K562 (cell line): ENCODE measurements at regions of chr20 and their contacts with region 1.

Region 1: DNA sequence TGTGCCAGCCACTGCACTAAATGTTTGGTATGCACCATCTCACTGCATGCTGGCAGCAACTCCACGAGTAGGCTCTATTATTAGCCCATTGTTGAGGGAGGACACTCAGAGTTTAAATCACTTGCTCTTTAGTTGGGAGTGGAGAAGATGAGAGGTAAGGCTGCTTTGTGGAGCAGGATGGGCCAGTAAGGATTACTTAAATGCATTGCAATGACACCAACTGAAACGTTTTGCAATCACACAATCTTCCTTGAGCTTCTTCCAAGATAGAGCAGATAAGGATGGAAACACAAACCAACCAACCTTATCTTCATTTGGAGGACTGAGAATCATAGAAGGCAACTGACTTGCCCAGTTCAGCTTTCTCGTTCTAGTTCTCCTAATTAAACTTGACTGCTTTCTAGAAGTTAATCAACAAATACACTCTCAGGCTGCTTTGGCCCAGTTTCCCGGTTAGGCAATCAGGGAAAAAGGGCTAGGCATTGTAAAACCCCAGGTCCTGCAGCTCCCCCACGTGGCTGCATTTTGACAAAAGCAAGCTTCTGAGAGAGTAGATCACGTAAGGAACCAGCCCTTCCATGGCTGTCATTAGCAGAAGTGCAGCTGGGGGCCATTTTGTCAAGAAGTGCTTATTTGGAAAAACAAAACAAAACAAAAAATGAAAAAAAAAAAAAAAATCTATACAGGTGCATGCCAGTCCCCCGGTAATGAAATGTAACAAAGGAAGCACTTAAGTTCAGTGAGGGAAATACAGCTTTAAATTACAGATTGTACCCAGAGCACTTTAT is 130.6 kb downstream of the BCAS1 start:
- DNase-seq: peak; percentile 80 to 95 (median 81)
- ATAC-seq: peak; percentile 87
- H3K4me3 ChIP-seq: no peak overlapping the region
- H3K27ac ChIP-seq: peak overlapping the region; percentile 33; the same call in 2 of the 3 replicates
- H3K4me1 ChIP-seq: peaks cover 0 to 56% of the 10 kb centered on the region in 2 experiments; a peak in 4 of 5 replicates
- H3K27me3 ChIP-seq: no peaks in the 10 kb centered on the region
- CTCF ChIP-seq: peak; percentile 87 to 91 (median 88)
- EP300 ChIP-seq: no peak
- POLR2A ChIP-seq: no peak
- RAD21 ChIP-seq: peak; percentile 94 to 96

Region 2: GRCh38 chr20:53413186-53413631 is 526.6 kb before region 1 on chr20:
- CTCF ChIA-PET with region 1: interaction called, 8 read pairs
- POLR2A ChIA-PET with region 1: interaction called, 3 read pairs
- in situ Hi-C with region 1: no loop called
- intact Hi-C with region 1: loop called (anchors 2 kb)
- DNase-seq: peak; percentile 61 to 67 (median 62)
- ATAC-seq: peak; percentile 88
- H3K4me3 ChIP-seq: no peak overlapping the region
- H3K27ac ChIP-seq: no peak overlapping the region
- H3K4me1 ChIP-seq: no peaks in the 10 kb centered on the region; a peak in 2 of 5 replicates
- H3K27me3 ChIP-seq: peaks cover 0 to 5% of the 10 kb centered on the region in 2 experiments; a peak in 4 of 5 replicates
- CTCF ChIP-seq: peak; percentile 77 to 91 (median 85)
- EP300 ChIP-seq: no peak
- POLR2A ChIP-seq: no peak
- RAD21 ChIP-seq: peak; percentile 66 to 83

Region 3: GRCh38 chr20:53594068-53595017 is 345.4 kb before region 1 on chr20:
- CTCF ChIA-PET with region 1: interaction called, 3 read pairs
- POLR2A ChIA-PET with region 1: interaction called, 3 read pairs
- in situ Hi-C with region 1: no loop called
- intact Hi-C with region 1: loop called (anchors 5 kb)
- DNase-seq: peak; percentile 85 to 92 (median 88)
- ATAC-seq: peak; percentile 76
- H3K4me3 ChIP-seq: peak overlapping the region; percentile 90
- H3K27ac ChIP-seq: peak overlapping the region; percentile 93
- H3K4me1 ChIP-seq: peaks cover 8 to 15% of the 10 kb centered on the region in 2 experiments; a peak in 4 of 5 replicates
- H3K27me3 ChIP-seq: no peaks in the 10 kb centered on the region
- CTCF ChIP-seq: peak in 2 of 3 experiments; percentile 59 to 79; a peak in 4 of 6 replicates
- EP300 ChIP-seq: no peak
- POLR2A ChIP-seq: no peak
- RAD21 ChIP-seq: peak; percentile 12 to 58; a peak in 2 of 4 replicates

Region 4: DNA sequence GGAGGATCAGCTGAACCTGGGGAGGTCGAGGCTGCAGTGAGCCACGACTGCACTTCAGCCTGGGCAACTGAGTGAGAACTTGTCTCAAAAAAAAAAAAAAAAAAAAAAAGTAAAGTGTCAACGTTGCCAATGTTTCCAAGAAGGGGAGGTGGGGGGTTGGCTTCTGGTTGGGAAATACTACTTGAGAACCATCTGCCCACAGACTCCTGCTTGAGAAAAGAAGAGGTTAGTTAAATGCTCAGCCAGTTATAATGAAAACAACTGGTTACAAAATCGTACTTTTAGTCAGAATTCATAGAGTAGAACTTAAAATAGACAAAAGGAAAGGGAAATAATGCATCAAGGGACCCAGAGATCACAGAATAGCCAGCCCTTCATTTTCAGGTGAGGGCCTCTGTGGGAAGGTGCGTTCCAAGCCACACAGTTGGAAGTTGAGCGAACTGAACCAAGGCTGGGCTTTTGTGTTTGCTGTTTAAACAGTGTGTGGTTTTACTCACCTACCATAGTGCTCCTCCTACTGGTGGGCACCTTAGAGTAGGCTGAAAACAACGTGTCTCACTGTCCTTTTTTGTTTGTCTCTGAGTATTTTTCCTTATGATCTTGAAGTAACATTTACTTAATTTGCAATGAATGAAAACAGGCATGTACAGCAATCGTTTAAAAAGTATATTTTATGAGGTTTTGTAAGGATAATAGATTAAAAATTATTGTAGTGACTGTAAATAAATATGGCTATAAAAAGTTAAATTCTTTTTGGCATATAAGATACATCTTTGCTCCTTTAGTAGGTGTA is 70.1 kb before region 1 on chr20:
- CTCF ChIA-PET with region 1: no interaction called
- POLR2A ChIA-PET with region 1: interaction called, 3 read pairs
- in situ Hi-C with region 1: no loop called
- intact Hi-C with region 1: loop called (anchors 5 kb)
- DNase-seq: peak; percentile 54 to 90 (median 64)
- ATAC-seq: peak; percentile 93
- H3K4me3 ChIP-seq: no peak overlapping the region
- H3K27ac ChIP-seq: peak overlapping the region; percentile 48
- H3K4me1 ChIP-seq: peaks cover 2 to 10% of the 10 kb centered on the region in 2 experiments; a peak in 3 of 5 replicates
- H3K27me3 ChIP-seq: no peaks in the 10 kb centered on the region
- CTCF ChIP-seq: peak; percentile 75 to 88 (median 85)
- EP300 ChIP-seq: no peak
- POLR2A ChIP-seq: no peak
- RAD21 ChIP-seq: peak; percentile 88 to 90

Region 5: GRCh38 chr20:53984356-53985149 is 44.8 kb after region 1 on chr20:
- CTCF ChIA-PET with region 1: no interaction called
- POLR2A ChIA-PET with region 1: no interaction called
- in situ Hi-C with region 1: no loop called
- intact Hi-C with region 1: no loop called
- DNase-seq: no peak
- ATAC-seq: no peak
- H3K4me3 ChIP-seq: no peak overlapping the region
- H3K27ac ChIP-seq: no peak overlapping the region
- H3K4me1 ChIP-seq: no peaks in the 10 kb centered on the region
- H3K27me3 ChIP-seq: peaks cover 3 to 15% of the 10 kb centered on the region in 2 experiments; a peak in 4 of 5 replicates
- CTCF ChIP-seq: no peak
- EP300 ChIP-seq: no peak
- POLR2A ChIP-seq: no peak
- RAD21 ChIP-seq: no peak

Region 6: GRCh38 chr20:54199721-54200176 is 260.0 kb after region 1 on chr20:
- CTCF ChIA-PET with region 1: interaction called, 3 read pairs
- POLR2A ChIA-PET with region 1: no interaction called
- in situ Hi-C with region 1: no loop called
- intact Hi-C with region 1: loop called (anchors 5 kb)
- DNase-seq: peak; percentile 59 to 78 (median 62)
- ATAC-seq: peak; percentile 79
- H3K4me3 ChIP-seq: no peak overlapping the region
- H3K27ac ChIP-seq: no peak overlapping the region
- H3K4me1 ChIP-seq: no peaks in the 10 kb centered on the region
- H3K27me3 ChIP-seq: peaks cover 3 to 21% of the 10 kb centered on the region in 2 experiments; a peak in 3 of 5 replicates
- CTCF ChIP-seq: peak; percentile 80 to 93 (median 92)
- EP300 ChIP-seq: no peak
- POLR2A ChIP-seq: no peak
- RAD21 ChIP-seq: peak; percentile 81 to 86